ENCODE measurements at regions of chr7 and their contacts with region 1.

Region 1: GRCh38 chr7:129376076-129376777 is 58.0 kb upstream of the STRIP2 start:
- DNase-seq: peak; percentile 71
- ATAC-seq: peak; percentile 99
- H3K4me3 ChIP-seq: no peak overlapping the region
- H3K27ac ChIP-seq: no peak overlapping the region
- H3K4me1 ChIP-seq: no peaks in the 10 kb centered on the region
- H3K27me3 ChIP-seq: no peaks in the 10 kb centered on the region
- CTCF ChIP-seq: peak; percentile 85

Region 2: DNA sequence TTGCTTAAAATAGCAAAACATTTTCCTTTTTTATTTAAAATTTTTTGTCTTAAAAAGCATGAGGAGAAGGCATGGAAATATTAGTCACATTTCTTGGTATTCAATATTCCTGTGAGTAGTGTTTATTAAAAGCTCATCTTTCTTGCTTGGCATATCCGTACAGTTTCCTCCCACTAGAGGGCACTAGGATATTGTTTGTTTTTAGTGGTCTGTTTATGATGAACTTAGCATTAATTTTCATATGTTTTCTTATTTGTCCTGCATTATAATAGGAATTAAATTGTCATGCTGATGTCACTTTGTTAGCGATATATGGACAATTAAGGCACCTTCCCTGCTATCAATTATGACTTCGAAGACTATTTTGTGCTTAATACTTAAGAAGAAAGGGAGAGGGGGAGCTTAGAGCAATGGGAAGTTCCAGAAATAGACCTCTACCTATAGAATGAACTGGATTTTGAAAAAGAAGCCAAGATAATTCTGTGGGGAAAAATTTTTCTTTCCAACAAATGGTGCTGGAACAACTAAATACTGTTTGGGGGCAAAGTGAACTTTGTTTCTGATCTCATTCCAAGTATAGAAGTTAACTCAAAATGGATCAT is 33.0 kb before region 1 on chr7:
- CTCF ChIA-PET with region 1: interaction called, 12 read pairs
- POLR2A ChIA-PET with region 1: no interaction called
- intact Hi-C with region 1: no loop called
- DNase-seq: peak; percentile 68
- ATAC-seq: peak; percentile 85
- H3K4me3 ChIP-seq: no peak overlapping the region
- H3K27ac ChIP-seq: no peak overlapping the region
- H3K4me1 ChIP-seq: no peaks in the 10 kb centered on the region; the same call in none of the 2 replicates
- H3K27me3 ChIP-seq: no peaks in the 10 kb centered on the region
- CTCF ChIP-seq: peak; percentile 86

Region 3: DNA sequence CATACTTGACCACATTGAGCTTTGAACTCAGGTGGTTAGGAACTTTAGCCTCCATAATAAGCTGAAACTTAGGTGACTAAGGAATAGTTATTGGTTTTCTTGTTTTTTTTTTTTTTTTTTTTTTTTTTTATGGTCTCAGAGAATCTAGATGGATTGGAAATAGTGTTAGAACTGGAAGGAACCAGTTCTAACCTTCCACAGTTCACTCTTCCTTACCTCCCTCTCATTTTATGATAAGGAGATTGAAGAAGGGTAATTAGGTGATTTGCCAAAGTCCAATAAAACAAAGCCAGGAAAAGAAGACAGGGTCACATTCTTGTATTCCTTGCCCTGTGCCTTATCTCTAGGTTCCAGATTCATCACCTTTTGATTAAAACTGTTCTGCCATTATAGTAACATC is 13.7 kb before region 1 on chr7:
- CTCF ChIA-PET with region 1: interaction called, 50 read pairs
- POLR2A ChIA-PET with region 1: interaction called, 14 read pairs
- intact Hi-C with region 1: loop called (anchors 1 kb)
- DNase-seq: no peak
- ATAC-seq: no peak
- H3K4me3 ChIP-seq: no peak overlapping the region
- H3K27ac ChIP-seq: no peak overlapping the region
- H3K4me1 ChIP-seq: peaks cover 4% of the 10 kb centered on the region; the same call in 1 of the 2 replicates
- H3K27me3 ChIP-seq: no peaks in the 10 kb centered on the region
- CTCF ChIP-seq: no peak

Region 4: DNA sequence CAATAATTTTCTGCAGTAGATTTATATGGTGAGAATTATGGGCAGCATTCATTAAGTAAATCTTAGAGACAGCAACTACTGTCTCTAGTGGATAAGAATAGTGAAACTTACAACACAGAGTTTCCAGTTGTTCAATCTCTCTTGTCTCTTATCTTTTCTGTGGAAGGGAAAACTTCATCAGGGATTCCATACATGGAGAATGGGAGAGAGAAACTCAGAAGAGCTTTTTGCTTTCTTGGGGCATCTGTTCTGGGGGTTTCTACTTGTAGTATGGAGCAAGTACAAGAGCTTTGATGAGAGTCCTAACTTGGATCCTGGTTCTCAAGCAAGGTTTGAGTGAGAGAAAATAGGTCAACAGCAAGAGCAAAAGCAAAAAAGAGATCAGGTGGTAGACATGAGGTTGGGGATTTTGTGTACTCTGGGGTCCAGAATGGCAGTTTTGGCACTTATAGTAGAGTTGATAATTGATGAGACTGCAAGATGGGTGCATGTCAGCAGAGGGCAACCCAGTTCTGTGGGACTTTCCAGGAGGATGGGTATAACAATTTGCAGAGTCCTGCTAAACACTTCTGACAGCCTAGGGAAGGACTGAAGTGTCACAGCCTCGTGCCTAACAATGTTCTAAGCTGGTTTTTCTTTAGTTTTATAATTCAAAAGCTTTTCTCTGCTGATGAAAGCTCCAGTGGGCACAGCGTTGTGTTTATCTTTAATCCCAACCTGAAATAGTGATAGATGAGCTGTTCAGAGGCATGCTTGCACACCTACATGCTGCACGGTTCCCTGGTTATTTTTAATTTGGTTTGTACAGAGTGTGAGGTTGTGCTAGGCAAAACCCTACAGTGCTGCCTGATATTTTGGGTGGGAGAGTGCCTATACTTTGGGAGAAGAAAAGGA is 26.0 kb after region 1 on chr7:
- CTCF ChIA-PET with region 1: interaction called, 11 read pairs
- POLR2A ChIA-PET with region 1: no interaction called
- intact Hi-C with region 1: loop called (anchors 2 kb)
- DNase-seq: peak; percentile 45
- ATAC-seq: peak; percentile 31
- H3K4me3 ChIP-seq: no peak overlapping the region
- H3K27ac ChIP-seq: peak overlapping the region; percentile 50
- H3K4me1 ChIP-seq: peaks cover 18% of the 10 kb centered on the region
- H3K27me3 ChIP-seq: no peaks in the 10 kb centered on the region
- CTCF ChIP-seq: peak; percentile 59